ENCODE measurements at regions of chr15 and their contacts with region 1.

Region 1: DNA sequence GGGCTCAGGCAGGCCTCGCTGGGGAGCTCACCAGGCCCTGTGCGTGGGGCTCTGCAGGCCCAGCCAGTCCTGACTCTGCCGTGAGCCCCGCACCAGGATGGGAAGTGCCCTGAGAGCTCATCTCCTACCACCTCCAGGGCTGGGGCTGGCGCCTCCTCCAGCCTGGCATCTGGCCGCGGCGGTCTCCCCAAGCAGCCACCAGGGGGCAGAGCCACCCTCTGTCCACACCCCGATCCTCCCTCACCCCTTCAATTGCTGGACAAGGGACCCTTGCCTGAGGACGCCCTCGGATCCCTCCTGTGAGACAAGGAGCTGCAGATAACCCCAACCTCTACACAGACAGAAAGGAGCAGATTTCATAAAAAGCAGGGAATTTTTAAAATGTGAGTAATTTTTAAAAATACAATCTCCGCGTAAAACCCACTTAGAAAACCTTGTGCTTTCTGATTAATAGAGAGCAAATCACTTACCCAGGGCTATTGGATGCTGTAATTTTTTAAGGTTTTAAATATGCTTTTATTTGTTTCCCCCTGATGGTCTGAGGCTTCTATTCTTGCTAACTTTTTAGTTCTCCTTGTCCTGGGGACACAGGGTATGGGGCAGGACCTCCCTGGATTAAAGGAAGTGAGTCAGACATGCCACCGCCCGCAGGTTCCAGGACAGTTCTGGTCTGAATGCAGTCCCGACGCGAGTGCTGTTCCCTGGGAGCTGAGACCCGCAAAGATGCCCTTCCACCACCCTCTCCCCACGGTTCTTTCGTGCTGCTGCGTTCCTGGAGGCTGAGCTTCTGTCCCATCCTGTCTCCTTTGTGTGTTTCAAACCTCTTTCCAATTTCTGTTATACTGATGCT is 52.3 kb upstream of the CHRNA7 start:
- H3K4me3 Mint-ChIP-seq: no peak overlapping the region
- H3K27ac Mint-ChIP-seq: no peak overlapping the region
- H3K4me1 Mint-ChIP-seq: peaks cover 16% of the 10 kb centered on the region
- H3K27me3 Mint-ChIP-seq: peaks cover 20% of the 10 kb centered on the region

Region 2: GRCh38 chr15:31571671-31572070 is 406.4 kb before region 1 on chr15:
- intact Hi-C with region 1: loop called (anchors 5 kb)
- H3K4me3 Mint-ChIP-seq: no peak overlapping the region
- H3K27ac Mint-ChIP-seq: no peak overlapping the region
- H3K4me1 Mint-ChIP-seq: peaks cover 5% of the 10 kb centered on the region
- H3K27me3 Mint-ChIP-seq: peaks cover 8% of the 10 kb centered on the region

Region 3: GRCh38 chr15:31740203-31740602 is 237.8 kb before region 1 on chr15:
- intact Hi-C with region 1: no loop called
- H3K4me3 Mint-ChIP-seq: no peak overlapping the region
- H3K27ac Mint-ChIP-seq: no peak overlapping the region
- H3K4me1 Mint-ChIP-seq: no peaks in the 10 kb centered on the region
- H3K27me3 Mint-ChIP-seq: no peaks in the 10 kb centered on the region

Region 4: GRCh38 chr15:31901501-31901900 is 76.5 kb before region 1 on chr15:
- intact Hi-C with region 1: no loop called
- H3K4me3 Mint-ChIP-seq: no peak overlapping the region
- H3K27ac Mint-ChIP-seq: no peak overlapping the region
- H3K4me1 Mint-ChIP-seq: no peaks in the 10 kb centered on the region
- H3K27me3 Mint-ChIP-seq: peaks cover 4% of the 10 kb centered on the region

Measured in dendritic cell treated with granulocyte-macrophage colony-stimulating factor and Interleukin-4, amounts not matched to agents 40 ng/mL and 50 ng/mL, for 4 days (primary cell).